CD4-positive, alpha-beta memory T cell (primary cell): ENCODE measurements at regions of chr1 and their contacts with region 1.

Region 1: GRCh38 chr1:114581335-114582287 is at the start of gene BCAS2:
- DNase-seq: peak; percentile 93 to 98 (median 97)
- H3K4me3 ChIP-seq: peak within 1 kb of the TSS; percentile 76 to 80
- H3K4me3 Mint-ChIP-seq: peak within 1 kb of the TSS; percentile 95 to 99 (median 96)
- H3K27ac ChIP-seq: peak within 1 kb of the TSS; percentile 90
- H3K27ac Mint-ChIP-seq: peak within 1 kb of the TSS; percentile 92 to 100 (median 99)
- H3K4me1 ChIP-seq: peaks cover 30% of the 10 kb centered on the region
- H3K4me1 Mint-ChIP-seq: peaks cover 14 to 42% (median 27%) of the 10 kb centered on the region in 4 donors
- H3K27me3 ChIP-seq: no peaks in the 10 kb centered on the region
- H3K27me3 Mint-ChIP-seq: peaks cover 0 to 1% of the 10 kb centered on the region in 2 donors
- total RNA-seq, gene BCAS2: 33.9 to 40.8 TPM

Region 2: DNA sequence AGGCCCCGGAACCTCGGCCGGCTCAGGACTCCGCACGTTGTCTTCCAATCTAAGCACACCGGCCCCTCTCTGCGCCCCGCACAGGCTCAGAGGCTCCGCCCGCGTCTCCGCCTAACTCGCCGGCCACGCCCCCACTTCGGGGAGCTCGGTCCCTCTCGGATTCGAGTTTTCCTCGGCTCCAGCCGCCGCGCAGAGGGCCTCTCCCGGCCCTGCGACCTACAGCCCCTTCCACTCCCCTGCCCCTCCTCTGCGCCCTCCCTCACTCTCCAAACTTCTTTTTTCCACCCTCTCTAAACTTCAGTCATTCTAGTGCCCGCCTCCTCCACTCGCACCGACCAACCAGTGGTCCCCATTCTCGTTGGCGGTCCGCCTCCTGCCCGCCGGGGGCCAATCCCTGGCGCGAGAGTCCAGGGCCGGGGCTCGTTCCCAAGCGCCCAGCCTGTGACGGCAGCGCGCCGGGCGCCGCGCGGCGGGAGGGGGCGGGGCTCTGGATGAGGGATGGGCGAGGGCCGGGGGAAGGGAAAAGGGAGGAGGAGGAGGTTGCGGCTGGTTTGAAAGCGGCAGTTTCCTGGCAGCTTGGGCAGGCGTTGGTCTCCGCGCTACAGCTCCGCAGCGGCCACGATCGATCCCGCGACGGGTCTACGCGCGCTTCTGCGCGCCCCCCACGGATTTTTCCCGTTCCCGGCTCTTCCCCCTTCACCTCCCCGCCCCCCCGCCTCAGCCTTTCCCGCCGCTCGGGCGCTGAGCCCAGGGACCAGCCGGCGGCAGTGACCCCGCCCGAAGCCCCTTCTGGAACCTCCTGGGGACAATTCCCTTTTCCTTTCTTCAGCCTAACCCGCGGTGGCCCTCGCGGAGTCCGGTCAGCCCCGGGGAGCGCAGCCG is 1191.4 kb before region 1 on chr1 and contains the start of gene MAGI3:
- CTCF ChIA-PET with region 1: no interaction called
- POLR2A ChIA-PET with region 1: interaction called, 3 read pairs
- intact Hi-C with region 1: loop called (anchors 5 kb)
- DNase-seq: peak; percentile 92 to 94 (median 93)
- H3K4me3 ChIP-seq: peak within 1 kb of the TSS; percentile 44 to 89
- H3K4me3 Mint-ChIP-seq: peak within 1 kb of the TSS; percentile 88 to 98 (median 92)
- H3K27ac ChIP-seq: peak within 1 kb of the TSS; percentile 60
- H3K27ac Mint-ChIP-seq: peak within 1 kb of the TSS; percentile 80 to 95 (median 91)
- H3K4me1 ChIP-seq: peaks cover 30% of the 10 kb centered on the region
- H3K4me1 Mint-ChIP-seq: peaks cover 20 to 36% (median 23%) of the 10 kb centered on the region in 4 donors
- H3K27me3 ChIP-seq: no peaks in the 10 kb centered on the region
- H3K27me3 Mint-ChIP-seq: no peaks in the 10 kb centered on the region
- total RNA-seq, gene MAGI3: 6.5 to 6.7 TPM

Region 3: GRCh38 chr1:114386129-114387009 is 195.2 kb before region 1 on chr1:
- CTCF ChIA-PET with region 1: no interaction called
- POLR2A ChIA-PET with region 1: no interaction called
- intact Hi-C with region 1: no loop called
- DNase-seq: no peak
- H3K4me3 ChIP-seq: no peak overlapping the region
- H3K4me3 Mint-ChIP-seq: peak overlapping the region in 1 of 8 donors; percentile 22
- H3K27ac ChIP-seq: no peak overlapping the region
- H3K27ac Mint-ChIP-seq: no peak overlapping the region
- H3K4me1 ChIP-seq: no peaks in the 10 kb centered on the region
- H3K4me1 Mint-ChIP-seq: no peaks in the 10 kb centered on the region
- H3K27me3 ChIP-seq: no peaks in the 10 kb centered on the region
- H3K27me3 Mint-ChIP-seq: peaks cover 0 to 1% of the 10 kb centered on the region in 2 donors

Region 4: DNA sequence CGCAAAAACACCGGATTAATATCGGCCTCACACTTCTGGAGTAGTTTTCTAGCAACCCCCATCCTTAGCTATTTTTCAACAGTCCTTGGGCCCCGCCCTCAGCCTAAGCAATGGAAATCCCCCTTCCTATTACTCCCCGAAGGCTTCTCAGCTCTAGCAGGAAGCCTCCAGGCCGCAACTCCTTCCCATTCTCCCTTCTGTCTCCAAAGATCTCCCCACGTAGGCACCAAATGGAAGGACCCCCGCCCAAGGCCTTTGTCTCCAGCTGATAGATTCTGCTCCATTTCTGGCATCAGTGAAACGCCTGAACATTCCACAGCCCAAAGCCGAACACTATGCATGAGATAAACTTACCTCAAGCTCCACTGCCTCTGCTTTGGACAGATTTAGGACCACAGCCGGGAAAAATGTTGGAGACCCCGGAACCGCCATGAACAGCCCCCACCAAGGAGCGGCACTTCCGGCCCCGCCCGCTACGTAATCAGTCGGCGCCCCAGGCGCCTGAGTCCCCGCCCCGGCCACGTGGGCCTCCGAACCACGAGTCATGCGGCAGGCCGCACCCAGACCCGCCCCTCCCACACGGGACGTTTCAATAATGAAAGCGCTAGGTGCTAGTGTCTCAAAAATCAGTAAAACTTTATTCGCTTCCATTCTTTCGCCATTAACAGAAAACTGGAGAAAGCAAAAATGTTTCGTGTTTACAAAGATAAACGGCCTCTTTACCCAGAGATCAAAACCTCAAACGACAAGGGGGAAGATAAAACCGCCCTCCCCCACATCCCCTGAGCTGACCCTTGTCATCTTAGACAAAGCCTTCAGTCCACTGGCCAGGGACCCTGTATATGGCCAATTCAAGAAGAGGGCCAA is 134.9 kb after region 1 on chr1 and contains the start of gene NRAS:
- CTCF ChIA-PET with region 1: no interaction called
- POLR2A ChIA-PET with region 1: interaction called, 25 read pairs
- intact Hi-C with region 1: loop called (anchors 1 kb)
- DNase-seq: peak; percentile 93 to 96 (median 94)
- H3K4me3 ChIP-seq: peak within 1 kb of the TSS; percentile 83 to 90
- H3K4me3 Mint-ChIP-seq: peak within 1 kb of the TSS; percentile 94 to 99 (median 98)
- H3K27ac ChIP-seq: peak within 1 kb of the TSS; percentile 97
- H3K27ac Mint-ChIP-seq: peak within 1 kb of the TSS; percentile 99 to 100 (median 100)
- H3K4me1 ChIP-seq: peaks cover 21% of the 10 kb centered on the region
- H3K4me1 Mint-ChIP-seq: peaks cover 10 to 25% (median 19%) of the 10 kb centered on the region in 4 donors
- H3K27me3 ChIP-seq: no peaks in the 10 kb centered on the region
- H3K27me3 Mint-ChIP-seq: no peaks in the 10 kb centered on the region
- total RNA-seq, gene NRAS: 22.0 to 22.3 TPM

Region 5: DNA sequence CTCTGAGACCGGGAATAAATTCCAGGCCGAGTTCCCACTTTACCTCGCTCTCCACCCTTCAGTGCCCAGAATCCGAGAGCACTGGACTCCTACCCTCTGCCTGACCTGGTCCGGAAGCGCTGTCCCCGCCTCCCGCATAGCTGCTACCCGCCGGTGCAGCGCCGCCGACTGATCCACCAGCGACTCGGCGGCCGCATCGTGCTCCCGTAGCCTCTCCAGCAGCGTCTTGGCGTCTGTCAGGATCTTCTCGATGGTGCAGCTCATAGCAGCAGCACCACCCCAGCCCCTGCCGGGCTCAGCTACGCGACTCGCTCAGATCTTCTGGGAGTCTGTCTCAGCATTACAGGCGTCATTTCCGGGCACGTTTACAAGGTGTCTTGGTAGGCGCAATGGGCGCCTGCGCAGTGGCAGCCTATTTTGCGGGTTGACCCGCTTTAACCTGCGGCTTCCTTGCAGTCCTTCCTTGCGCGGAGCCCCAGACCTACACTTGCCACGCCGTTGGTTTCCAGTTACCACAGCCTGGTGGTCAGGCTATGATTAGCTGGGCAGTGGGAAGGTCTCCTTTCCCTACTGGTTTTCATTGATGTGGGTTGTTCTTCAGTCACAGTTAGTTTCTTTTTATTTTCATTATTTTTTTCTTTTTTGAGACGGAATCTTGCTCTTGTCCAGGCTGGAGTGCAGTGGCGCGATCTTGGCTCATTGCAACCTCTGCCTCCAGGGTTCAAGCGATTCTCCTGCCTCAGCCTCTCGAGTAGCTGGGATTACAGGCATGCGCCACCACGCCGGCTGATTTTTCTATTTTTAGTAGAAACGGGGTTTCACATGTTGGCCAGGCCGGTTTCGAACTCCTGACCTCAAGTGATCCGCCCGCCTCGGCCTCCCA is 199.0 kb after region 1 on chr1 and contains the start of gene SIKE1:
- CTCF ChIA-PET with region 1: interaction called, 3 read pairs
- POLR2A ChIA-PET with region 1: interaction called, 4 read pairs
- intact Hi-C with region 1: loop called (anchors 1 kb)
- DNase-seq: peak; percentile 93 to 98 (median 96)
- H3K4me3 ChIP-seq: peak within 1 kb of the TSS; percentile 77 to 83
- H3K4me3 Mint-ChIP-seq: peak within 1 kb of the TSS; percentile 95 to 100 (median 100)
- H3K27ac ChIP-seq: peak within 1 kb of the TSS; percentile 97
- H3K27ac Mint-ChIP-seq: peak within 1 kb of the TSS; percentile 93 to 100 (median 100)
- H3K4me1 ChIP-seq: peaks cover 18% of the 10 kb centered on the region
- H3K4me1 Mint-ChIP-seq: peaks cover 14 to 36% (median 26%) of the 10 kb centered on the region in 4 donors
- H3K27me3 ChIP-seq: no peaks in the 10 kb centered on the region
- H3K27me3 Mint-ChIP-seq: no peaks in the 10 kb centered on the region
- total RNA-seq, gene SIKE1: 66.6 to 67.1 TPM

Region 6: GRCh38 chr1:115098979-115099692 is 517.5 kb after region 1 on chr1:
- CTCF ChIA-PET with region 1: no interaction called
- POLR2A ChIA-PET with region 1: no interaction called
- intact Hi-C with region 1: loop called (anchors 10 kb)
- DNase-seq: peak; percentile 88 to 96 (median 94)
- H3K4me3 ChIP-seq: peak overlapping the region; percentile 38 to 58
- H3K4me3 Mint-ChIP-seq: peak overlapping the region; percentile 87 to 99 (median 95)
- H3K27ac ChIP-seq: peak overlapping the region; percentile 89
- H3K27ac Mint-ChIP-seq: peak overlapping the region; percentile 94 to 100 (median 100)
- H3K4me1 ChIP-seq: peaks cover 40% of the 10 kb centered on the region
- H3K4me1 Mint-ChIP-seq: peaks cover 45 to 64% (median 53%) of the 10 kb centered on the region in 4 donors
- H3K27me3 ChIP-seq: no peaks in the 10 kb centered on the region
- H3K27me3 Mint-ChIP-seq: no peaks in the 10 kb centered on the region